Left cardiac atrium (tissue), 4 donors: ENCODE measurements at regions of chr6 and their contacts with region 1.

Region 1: DNA sequence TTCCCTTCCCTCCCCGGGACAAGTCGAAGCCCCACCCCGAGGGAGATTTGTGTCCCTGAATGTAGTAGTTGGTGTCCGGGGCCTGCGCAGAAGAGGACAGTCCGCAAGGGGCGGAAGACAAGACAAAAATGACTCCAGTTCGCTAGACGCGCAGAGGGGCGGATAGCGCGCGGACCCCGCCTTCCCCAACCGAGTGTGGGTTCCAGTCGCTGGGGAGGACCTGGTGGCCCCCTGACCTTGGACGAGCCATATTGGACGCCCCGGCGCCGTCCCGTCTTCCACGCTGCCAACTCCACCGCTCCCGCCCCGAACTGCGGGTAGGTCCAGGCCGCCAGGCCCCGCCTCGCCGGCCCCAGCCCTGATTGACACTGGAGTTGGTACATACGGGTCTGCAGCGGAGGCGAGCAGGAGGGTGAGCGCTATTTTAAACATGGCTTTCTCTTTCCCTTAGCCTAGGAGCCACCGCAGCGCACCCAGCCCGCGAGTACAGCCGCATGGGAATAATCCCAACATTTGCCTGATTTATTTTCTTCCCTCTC is 802 bp downstream of the HMGN3 start:
- DNase-seq: peak; percentile 95
- ATAC-seq: peak; percentile 94 to 98

Region 2: DNA sequence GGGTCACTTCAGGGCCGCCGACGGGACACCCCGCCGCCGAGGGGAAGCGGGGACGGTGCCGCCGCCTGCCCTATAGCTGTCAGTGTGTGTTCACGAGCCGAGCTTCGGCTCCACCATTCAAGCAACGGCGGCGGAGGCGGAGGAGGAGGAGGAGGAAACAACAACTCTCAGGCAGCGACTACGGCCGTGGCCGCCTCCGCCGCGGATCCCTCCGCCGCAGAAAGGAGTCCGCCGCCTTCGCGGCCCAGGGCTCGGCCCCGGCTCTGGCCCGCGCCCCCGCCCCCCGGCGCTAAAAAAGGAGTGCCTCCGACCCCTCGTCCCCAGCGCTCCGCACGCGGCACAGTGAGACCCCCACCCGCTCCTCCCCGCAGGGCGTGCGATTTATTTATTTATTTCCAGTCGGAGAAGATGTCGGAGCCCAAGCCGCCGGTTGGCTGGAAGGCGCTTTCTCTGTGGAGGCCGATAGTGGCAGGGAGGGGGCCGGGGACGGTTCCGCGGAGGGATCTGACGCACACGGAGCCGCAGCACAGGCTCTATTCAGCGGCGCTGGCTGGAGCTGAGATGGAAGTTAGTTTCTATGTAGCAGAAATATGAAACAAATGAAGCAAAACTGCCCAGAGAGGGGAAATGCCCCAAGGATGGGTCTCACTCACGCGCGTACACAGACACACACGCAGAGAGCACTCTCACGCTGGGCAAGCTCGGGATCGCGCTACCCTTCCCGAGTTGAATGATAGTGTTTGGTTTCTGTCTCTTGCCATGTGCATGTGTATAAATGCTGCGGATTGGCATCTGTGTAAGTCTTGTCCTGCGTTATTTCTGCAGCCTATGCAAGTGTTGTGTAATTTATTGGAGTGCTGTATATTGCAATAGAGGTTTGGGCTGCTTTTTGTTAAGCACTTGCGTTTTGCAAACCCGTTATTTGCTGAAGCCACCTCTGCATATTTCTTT is 155.3 kb before region 1 on chr6 and contains the start of gene PHIP:
- intact Hi-C with region 1: loop called in 1 of 2 experiments (anchors 5 kb)
- DNase-seq: peak; percentile 95
- ATAC-seq: peak; percentile 93 to 95
- total RNA-seq, gene PHIP: 14.6 to 17.1 TPM